ENCODE measurements at regions of chr11 and their contacts with region 1.

Region 1: GRCh38 chr11:85991514-85991913 is 77.4 kb downstream of the PICALM start:
- DNase-seq: no peak
- ATAC-seq: no peak
- H3K4me3 Mint-ChIP-seq: no peak overlapping the region
- H3K27ac Mint-ChIP-seq: no peak overlapping the region
- H3K4me1 Mint-ChIP-seq: peaks cover 15% of the 10 kb centered on the region
- H3K27me3 Mint-ChIP-seq: no peaks in the 10 kb centered on the region

Region 2: GRCh38 chr11:85810871-85811611 is 180.5 kb before region 1 on chr11 and contains the start of gene SYTL2:
- CTCF ChIA-PET with region 1: no interaction called
- POLR2A ChIA-PET with region 1: no interaction called
- intact Hi-C with region 1: no loop called
- DNase-seq: peak; percentile 84
- ATAC-seq: peak; percentile 95
- H3K4me3 Mint-ChIP-seq: peak within 1 kb of the TSS; percentile 73
- H3K27ac Mint-ChIP-seq: peak within 1 kb of the TSS; percentile 63
- H3K4me1 Mint-ChIP-seq: peaks cover 33% of the 10 kb centered on the region
- H3K27me3 Mint-ChIP-seq: peaks cover 8% of the 10 kb centered on the region
- total RNA-seq, gene SYTL2: 5.2 to 6.8 TPM

Region 3: GRCh38 chr11:85977751-85978160 is 13.8 kb before region 1 on chr11:
- CTCF ChIA-PET with region 1: interaction called, 4 read pairs
- POLR2A ChIA-PET with region 1: no interaction called
- intact Hi-C with region 1: loop called in 1 of 2 experiments (anchors 2 kb)
- DNase-seq: no peak
- ATAC-seq: no peak
- H3K4me3 Mint-ChIP-seq: no peak overlapping the region
- H3K27ac Mint-ChIP-seq: peak overlapping the region; percentile 51
- H3K4me1 Mint-ChIP-seq: peaks cover 15% of the 10 kb centered on the region
- H3K27me3 Mint-ChIP-seq: no peaks in the 10 kb centered on the region